Activated CD4-positive, alpha-beta memory T cell treated with anti-CD3 and anti-CD28 coated beads, Interleukin-2, amount 10 ng/mL, durations not matched to agents 7 days and 5 days (primary cell): ENCODE measurements at regions of chr2 and their contacts with region 1.

Region 1: DNA sequence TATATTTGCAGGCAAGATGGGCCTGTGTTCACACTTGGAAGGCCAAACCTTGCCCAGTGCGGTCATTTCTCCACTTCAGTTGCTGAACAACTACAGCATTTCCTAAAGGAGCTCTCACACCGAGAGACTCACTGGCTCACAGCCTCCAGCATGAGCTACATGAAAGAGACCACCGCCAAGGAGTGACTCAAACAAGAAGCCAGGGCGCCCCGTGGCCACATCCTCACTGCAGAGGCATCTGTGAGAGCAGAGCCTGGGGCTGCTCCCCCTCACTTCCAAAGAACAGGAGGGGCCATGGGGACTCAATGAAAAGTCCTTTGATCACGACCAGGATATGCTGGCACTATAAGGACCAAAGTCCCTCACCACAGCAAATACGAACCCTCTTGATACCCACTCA is 50.0 kb downstream of the TMEM163 start:
- DNase-seq: peak; percentile 93
- H3K4me3 Mint-ChIP-seq: peak overlapping the region; percentile 16
- H3K27ac Mint-ChIP-seq: peak overlapping the region; percentile 81
- H3K4me1 Mint-ChIP-seq: peaks cover 85% of the 10 kb centered on the region
- H3K27me3 Mint-ChIP-seq: peaks cover 15% of the 10 kb centered on the region

Region 2: DNA sequence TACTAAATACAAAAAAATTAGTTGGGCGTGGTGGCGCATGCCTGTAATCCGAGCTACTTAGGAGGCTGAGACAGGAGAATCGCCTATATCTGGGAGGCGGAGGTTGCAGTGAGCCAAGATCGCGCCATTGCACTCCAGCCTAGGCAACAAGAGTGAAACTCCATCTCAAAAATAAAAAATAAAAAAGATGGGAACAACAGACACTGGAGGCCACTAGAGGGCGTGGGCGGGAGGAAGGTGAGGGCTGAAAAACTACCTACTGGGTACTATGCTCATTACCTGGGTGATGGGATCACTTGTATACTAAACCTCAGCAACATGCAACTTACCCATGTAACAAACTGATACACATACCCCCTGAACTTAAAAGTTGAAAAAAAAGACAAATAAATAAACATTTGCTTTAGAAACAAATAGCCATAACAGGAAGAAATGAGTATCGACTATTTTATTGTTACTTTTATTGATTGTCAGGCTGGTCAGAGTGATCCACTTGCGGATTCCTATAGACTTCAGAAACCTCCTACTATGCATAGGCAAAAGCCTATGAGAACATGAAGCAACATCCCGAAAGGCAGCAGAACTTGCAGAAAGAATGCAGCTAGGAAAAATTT is 11.1 kb before region 1 on chr2:
- CTCF ChIA-PET with region 1: interaction called, 24 read pairs
- POLR2A ChIA-PET with region 1: interaction called, 20 read pairs
- DNase-seq: peak; percentile 54
- H3K4me3 Mint-ChIP-seq: no peak overlapping the region
- H3K27ac Mint-ChIP-seq: no peak overlapping the region
- H3K4me1 Mint-ChIP-seq: peaks cover 21% of the 10 kb centered on the region
- H3K27me3 Mint-ChIP-seq: peaks cover 2% of the 10 kb centered on the region

Region 3: GRCh38 chr2:134679745-134680144 is 10.9 kb after region 1 on chr2:
- CTCF ChIA-PET with region 1: no interaction called
- POLR2A ChIA-PET with region 1: interaction called, 49 read pairs
- DNase-seq: peak; percentile 71
- H3K4me3 Mint-ChIP-seq: peak overlapping the region; percentile 33
- H3K27ac Mint-ChIP-seq: peak overlapping the region; percentile 80
- H3K4me1 Mint-ChIP-seq: peaks cover 79% of the 10 kb centered on the region
- H3K27me3 Mint-ChIP-seq: peaks cover 4% of the 10 kb centered on the region

Region 4: GRCh38 chr2:134758633-134759032 is 89.8 kb after region 1 on chr2:
- CTCF ChIA-PET with region 1: no interaction called
- POLR2A ChIA-PET with region 1: no interaction called
- DNase-seq: no peak
- H3K4me3 Mint-ChIP-seq: no peak overlapping the region
- H3K27ac Mint-ChIP-seq: no peak overlapping the region
- H3K4me1 Mint-ChIP-seq: peaks cover 6% of the 10 kb centered on the region
- H3K27me3 Mint-ChIP-seq: peaks cover 56% of the 10 kb centered on the region